ENCODE measurements at regions of chr12 and their contacts with region 1.

Region 1: GRCh38 chr12:82627569-82628198 is 59.0 kb upstream of the TMTC2 start:
- DNase-seq: no peak
- H3K4me3 ChIP-seq: no peak overlapping the region
- H3K27ac ChIP-seq: no peak overlapping the region
- H3K4me1 ChIP-seq: no peaks in the 10 kb centered on the region
- H3K27me3 ChIP-seq: no peaks in the 10 kb centered on the region
- CTCF ChIP-seq: peak; percentile 70

Region 2: GRCh38 chr12:81644503-81644902 is 983.2 kb before region 1 on chr12:
- CTCF ChIA-PET with region 1: no interaction called
- POLR2A ChIA-PET with region 1: no interaction called
- intact Hi-C with region 1: loop called (anchors 10 kb)
- DNase-seq: peak in 1 of 2 experiments; percentile 39
- H3K4me3 ChIP-seq: no peak overlapping the region
- H3K27ac ChIP-seq: no peak overlapping the region
- H3K4me1 ChIP-seq: no peaks in the 10 kb centered on the region
- H3K27me3 ChIP-seq: no peaks in the 10 kb centered on the region
- CTCF ChIP-seq: peak; percentile 71

Region 3: DNA sequence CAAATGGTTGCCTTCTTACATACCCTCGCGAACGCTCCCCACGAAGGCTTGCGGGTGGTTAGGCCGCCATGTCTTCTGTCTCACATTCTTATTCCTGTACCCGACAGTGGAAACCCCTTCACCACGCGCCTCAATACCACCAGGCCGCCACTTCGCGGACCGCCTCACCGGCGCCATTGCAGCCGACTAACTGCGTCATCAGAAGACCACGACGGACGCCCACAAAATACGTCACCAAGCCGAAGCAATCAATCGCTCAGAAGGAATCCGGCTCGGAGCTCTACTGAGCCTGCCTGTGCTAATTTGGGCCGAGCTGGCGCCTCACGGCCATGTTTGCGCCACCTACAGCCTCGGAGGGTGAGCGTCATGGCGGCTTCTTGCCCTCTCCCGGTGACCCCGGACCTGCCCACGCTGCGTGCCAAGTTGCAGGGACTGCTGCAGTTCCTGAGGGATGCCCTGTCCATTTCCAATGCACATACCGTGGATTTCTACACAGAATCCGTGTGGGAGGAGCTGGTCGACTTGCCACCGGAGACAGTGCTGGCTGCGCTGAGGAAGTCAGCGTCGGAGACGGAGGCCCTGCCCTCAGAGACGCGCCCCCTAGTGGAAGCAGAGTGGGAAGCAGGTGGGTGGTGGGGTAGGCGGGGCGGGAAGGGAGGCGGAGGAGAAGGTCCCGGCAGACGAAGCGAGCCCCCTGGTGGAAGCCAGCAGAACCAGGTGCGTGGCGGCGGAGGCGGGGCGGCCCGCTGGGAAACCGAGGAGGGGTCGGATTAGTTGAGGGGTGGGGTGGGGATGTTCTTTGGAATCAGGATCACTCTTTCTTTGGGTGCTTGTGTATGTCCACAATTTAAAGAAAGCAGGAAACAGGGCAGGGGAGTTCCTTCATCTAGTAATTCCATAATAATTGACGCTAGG is 269.2 kb before region 1 on chr12 and contains the starts of genes CCDC59 and METTL25:
- CTCF ChIA-PET with region 1: interaction called, 6 read pairs
- POLR2A ChIA-PET with region 1: no interaction called
- intact Hi-C with region 1: loop called (anchors 1 kb)
- DNase-seq: peak; percentile 91 to 93
- H3K4me3 ChIP-seq: peak within 1 kb of the TSS; percentile 89
- H3K27ac ChIP-seq: peak within 1 kb of the TSS; percentile 86
- H3K4me1 ChIP-seq: peaks cover 10% of the 10 kb centered on the region; the same call in 1 of the 2 replicates
- H3K27me3 ChIP-seq: no peaks in the 10 kb centered on the region
- CTCF ChIP-seq: peak; percentile 97
- total RNA-seq, gene CCDC59: 28.9 and 49.9 TPM in 2 replicates
- total RNA-seq, gene METTL25: 2.2 and 2.8 TPM in 2 replicates

Region 4: GRCh38 chr12:82383930-82384552 is 243.6 kb before region 1 on chr12:
- CTCF ChIA-PET with region 1: no interaction called
- POLR2A ChIA-PET with region 1: no interaction called
- intact Hi-C with region 1: loop called (anchors 5 kb)
- DNase-seq: no peak
- H3K4me3 ChIP-seq: no peak overlapping the region
- H3K27ac ChIP-seq: no peak overlapping the region
- H3K4me1 ChIP-seq: no peaks in the 10 kb centered on the region
- H3K27me3 ChIP-seq: no peaks in the 10 kb centered on the region
- CTCF ChIP-seq: peak; percentile 65

Region 5: DNA sequence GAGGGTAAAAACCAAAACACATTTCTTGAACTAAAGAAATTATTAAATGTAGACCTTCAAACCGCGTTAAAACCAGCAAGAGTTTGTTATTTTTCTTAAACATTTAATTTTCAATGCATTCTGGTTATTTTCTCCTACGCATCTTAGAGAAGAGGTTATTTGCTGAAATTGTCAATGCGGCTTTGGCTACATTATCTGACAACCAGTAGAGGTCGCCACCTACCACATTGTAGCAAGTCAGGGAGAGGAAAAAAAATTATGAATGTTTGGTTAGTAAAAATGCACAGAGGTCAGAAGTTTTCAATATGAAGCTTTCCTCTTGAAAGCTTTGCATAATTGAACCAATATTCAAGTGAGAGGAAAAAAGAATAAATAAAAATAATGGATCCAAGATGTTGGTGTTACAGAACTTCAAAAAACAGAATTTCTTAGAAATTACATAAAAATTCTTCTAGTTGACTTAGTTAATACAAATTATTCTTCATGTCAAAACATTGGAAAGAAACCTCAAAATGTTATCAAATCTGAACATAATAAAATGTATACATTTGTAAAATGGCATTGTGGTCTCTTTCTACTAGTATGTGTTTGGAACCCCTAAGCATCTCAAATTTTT is 100.4 kb before region 1 on chr12:
- CTCF ChIA-PET with region 1: interaction called, 3 read pairs
- POLR2A ChIA-PET with region 1: no interaction called
- intact Hi-C with region 1: loop called (anchors 1 kb)
- DNase-seq: peak; percentile 21 to 37
- H3K4me3 ChIP-seq: no peak overlapping the region
- H3K27ac ChIP-seq: no peak overlapping the region
- H3K4me1 ChIP-seq: no peaks in the 10 kb centered on the region
- H3K27me3 ChIP-seq: no peaks in the 10 kb centered on the region
- CTCF ChIP-seq: peak; percentile 94